ENCODE measurements at regions of chr4 and their contacts with region 1.

Region 1: GRCh38 chr4:152239216-152239615 is 296.7 kb downstream of the FBXW7 start:
- DNase-seq: no peak
- H3K4me3 Mint-ChIP-seq: no peak overlapping the region
- H3K27ac Mint-ChIP-seq: no peak overlapping the region
- H3K4me1 Mint-ChIP-seq: peaks cover 10% of the 10 kb centered on the region
- H3K27me3 Mint-ChIP-seq: no peaks in the 10 kb centered on the region

Region 2: GRCh38 chr4:152255437-152256011 is 16.3 kb after region 1 on chr4:
- CTCF ChIA-PET with region 1: interaction called, 17 read pairs
- POLR2A ChIA-PET with region 1: no interaction called
- DNase-seq: peak; percentile 77
- H3K4me3 Mint-ChIP-seq: no peak overlapping the region
- H3K27ac Mint-ChIP-seq: no peak overlapping the region
- H3K4me1 Mint-ChIP-seq: peaks cover 16% of the 10 kb centered on the region
- H3K27me3 Mint-ChIP-seq: no peaks in the 10 kb centered on the region

Region 3: GRCh38 chr4:153962311-153963039 is 1723.3 kb after region 1 on chr4:
- CTCF ChIA-PET with region 1: no interaction called
- POLR2A ChIA-PET with region 1: no interaction called
- DNase-seq: peak; percentile 45
- H3K4me3 Mint-ChIP-seq: no peak overlapping the region
- H3K27ac Mint-ChIP-seq: peak overlapping the region; percentile 0
- H3K4me1 Mint-ChIP-seq: peaks cover 9% of the 10 kb centered on the region
- H3K27me3 Mint-ChIP-seq: peaks cover 6% of the 10 kb centered on the region

Measured in activated CD4-positive, alpha-beta T cell treated with anti-CD3 and anti-CD28 coated beads, Interleukin-2, amount 10 ng/mL, durations not matched to agents 7 days and 5 days (primary cell).